Mammary epithelial cell (primary cell): ENCODE measurements at regions of chr19 and their contacts with region 1.

Region 1: GRCh38 chr19:11242864-11243797 is 3.7 kb downstream of the ANGPTL8 start:
- DNase-seq: peak; percentile 55
- H3K4me3 ChIP-seq: no peak overlapping the region
- H3K27ac ChIP-seq: no peak overlapping the region
- H3K4me1 ChIP-seq: peaks cover 4% of the 10 kb centered on the region
- H3K27me3 ChIP-seq: no peaks in the 10 kb centered on the region
- CTCF ChIP-seq: peak; percentile 42 to 75

Region 2: GRCh38 chr19:11256189-11256588 is 13.1 kb after region 1 on chr19:
- CTCF ChIA-PET with region 1: interaction called, 12 read pairs
- dilution Hi-C with region 1: no loop called
- in situ Hi-C with region 1: no loop called
- intact Hi-C with region 1: no loop called
- DNase-seq: no peak
- H3K4me3 ChIP-seq: no peak overlapping the region
- H3K27ac ChIP-seq: no peak overlapping the region
- H3K4me1 ChIP-seq: no peaks in the 10 kb centered on the region
- H3K27me3 ChIP-seq: no peaks in the 10 kb centered on the region
- CTCF ChIP-seq: no peak

Region 3: DNA sequence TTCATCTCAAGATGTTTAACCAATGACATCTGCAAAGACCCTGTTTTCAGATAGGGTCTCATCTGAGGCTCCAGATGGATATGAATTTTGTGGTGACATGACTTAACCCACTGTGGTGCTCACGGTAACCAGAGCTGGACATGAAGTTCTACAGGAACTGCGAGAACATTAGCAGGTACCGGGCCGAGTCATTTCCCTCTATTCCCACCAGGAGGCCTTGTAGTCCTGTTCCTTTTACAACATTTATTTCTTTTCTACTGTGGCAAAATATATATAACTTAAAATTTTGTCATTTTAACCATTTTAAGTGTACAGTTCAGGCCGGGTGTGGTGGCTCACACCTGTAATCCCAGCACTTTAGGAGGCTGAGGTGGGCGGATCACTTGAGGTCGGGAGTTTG is 45.2 kb after region 1 on chr19:
- CTCF ChIA-PET with region 1: interaction called, 11 read pairs
- dilution Hi-C with region 1: no loop called
- in situ Hi-C with region 1: no loop called
- intact Hi-C with region 1: loop called (anchors 5 kb)
- DNase-seq: no peak
- H3K4me3 ChIP-seq: no peak overlapping the region
- H3K27ac ChIP-seq: no peak overlapping the region
- H3K4me1 ChIP-seq: peaks cover 1% of the 10 kb centered on the region
- H3K27me3 ChIP-seq: no peaks in the 10 kb centered on the region
- CTCF ChIP-seq: peak; percentile 40 to 55

Region 4: GRCh38 chr19:11324079-11324661 is 81.0 kb after region 1 on chr19:
- CTCF ChIA-PET with region 1: no interaction called
- dilution Hi-C with region 1: loop called (anchors 5 kb)
- in situ Hi-C with region 1: no loop called
- intact Hi-C with region 1: no loop called
- DNase-seq: peak; percentile 91
- H3K4me3 ChIP-seq: no peak overlapping the region
- H3K27ac ChIP-seq: no peak overlapping the region
- H3K4me1 ChIP-seq: peaks cover 16% of the 10 kb centered on the region
- H3K27me3 ChIP-seq: no peaks in the 10 kb centered on the region
- CTCF ChIP-seq: no peak

Region 5: DNA sequence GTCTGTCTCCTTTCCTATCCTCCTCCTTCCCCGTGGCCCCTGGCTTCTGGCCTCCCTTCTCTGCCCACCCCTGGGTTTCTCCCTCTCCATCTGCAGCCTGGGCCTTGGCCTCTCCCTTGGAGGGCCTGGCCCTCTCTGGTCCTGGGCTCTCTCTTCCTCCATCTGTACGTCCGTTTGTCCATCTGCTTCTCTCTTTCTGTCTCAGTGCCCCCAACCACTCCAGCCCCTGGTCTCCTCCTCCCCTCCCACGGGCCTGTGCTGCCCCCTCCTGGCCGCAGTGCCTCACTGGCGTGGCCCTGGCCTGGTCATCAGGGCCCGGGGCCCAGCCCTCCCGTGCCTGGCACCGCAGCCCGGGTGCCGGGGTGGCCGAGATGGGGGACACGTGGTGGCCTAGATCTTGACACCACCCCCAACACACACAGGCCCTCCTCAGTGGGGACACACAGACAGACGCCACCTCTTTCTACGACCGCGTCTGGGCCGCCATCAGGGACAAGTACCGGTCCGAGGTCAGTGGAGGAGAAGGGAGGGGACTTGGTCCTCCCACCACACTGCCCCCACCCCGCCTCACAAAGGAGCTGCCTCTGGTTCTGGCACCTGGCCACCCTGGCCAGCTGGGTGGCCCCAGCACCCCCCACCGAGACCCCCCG is 203.6 kb after region 1 on chr19:
- CTCF ChIA-PET with region 1: no interaction called
- dilution Hi-C with region 1: no loop called
- in situ Hi-C with region 1: no loop called
- intact Hi-C with region 1: loop called (anchors 1 kb)
- DNase-seq: no peak
- H3K4me3 ChIP-seq: no peak overlapping the region
- H3K27ac ChIP-seq: no peak overlapping the region
- H3K4me1 ChIP-seq: peaks cover 16% of the 10 kb centered on the region
- H3K27me3 ChIP-seq: no peaks in the 10 kb centered on the region
- CTCF ChIP-seq: peak; percentile 51 to 75

Region 6: DNA sequence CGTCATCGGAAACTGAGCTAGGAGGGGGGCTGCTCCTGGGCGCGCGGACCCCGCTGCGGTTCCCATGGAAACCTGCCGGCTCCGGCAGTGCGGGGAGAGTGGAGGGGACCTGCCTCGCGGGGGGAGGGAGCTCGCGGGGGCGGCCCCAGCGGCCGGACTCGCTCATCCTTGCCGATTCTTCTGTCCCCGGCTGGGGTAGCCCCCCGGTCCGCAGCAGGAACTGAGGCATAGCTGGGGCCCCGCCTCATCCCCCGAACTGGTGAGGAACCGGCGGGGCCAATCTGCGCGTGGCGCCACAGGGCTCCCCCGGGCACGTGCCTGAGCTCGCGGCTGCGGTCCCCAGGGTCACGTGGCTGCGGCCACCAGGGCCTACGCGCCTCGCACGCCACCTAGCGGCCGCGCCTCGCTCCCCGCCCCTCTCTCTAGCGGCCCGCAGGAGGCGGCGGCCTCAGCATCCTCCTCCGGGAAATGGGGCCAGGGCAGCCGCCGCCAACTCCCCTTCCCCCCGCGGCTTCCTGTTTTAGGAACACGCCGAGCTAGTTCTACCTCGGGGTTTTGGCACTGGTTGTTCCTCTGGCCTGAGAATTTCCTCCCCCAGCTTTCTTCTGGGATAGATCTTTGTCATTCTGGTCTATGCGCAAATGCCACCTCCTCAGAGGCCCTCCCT is 239.4 kb after region 1 on chr19:
- CTCF ChIA-PET with region 1: no interaction called
- dilution Hi-C with region 1: no loop called
- in situ Hi-C with region 1: no loop called
- intact Hi-C with region 1: loop called (anchors 1 kb)
- DNase-seq: peak; percentile 69
- H3K4me3 ChIP-seq: peak overlapping the region; percentile 31 to 40 (median 35)
- H3K27ac ChIP-seq: no peak overlapping the region
- H3K4me1 ChIP-seq: peaks cover 9% of the 10 kb centered on the region
- H3K27me3 ChIP-seq: peaks cover 25% of the 10 kb centered on the region
- CTCF ChIP-seq: peak; percentile 61 to 91

Region 7: GRCh38 chr19:11587302-11587974 is 344.3 kb after region 1 on chr19:
- CTCF ChIA-PET with region 1: no interaction called
- dilution Hi-C with region 1: no loop called
- in situ Hi-C with region 1: no loop called
- intact Hi-C with region 1: loop called (anchors 1 kb)
- DNase-seq: peak; percentile 39
- H3K4me3 ChIP-seq: no peak overlapping the region
- H3K27ac ChIP-seq: no peak overlapping the region
- H3K4me1 ChIP-seq: peaks cover 3% of the 10 kb centered on the region
- H3K27me3 ChIP-seq: no peaks in the 10 kb centered on the region
- CTCF ChIP-seq: peak; percentile 87 to 93